ENCODE measurements at regions of chr5 and their contacts with region 1.

Region 1: DNA sequence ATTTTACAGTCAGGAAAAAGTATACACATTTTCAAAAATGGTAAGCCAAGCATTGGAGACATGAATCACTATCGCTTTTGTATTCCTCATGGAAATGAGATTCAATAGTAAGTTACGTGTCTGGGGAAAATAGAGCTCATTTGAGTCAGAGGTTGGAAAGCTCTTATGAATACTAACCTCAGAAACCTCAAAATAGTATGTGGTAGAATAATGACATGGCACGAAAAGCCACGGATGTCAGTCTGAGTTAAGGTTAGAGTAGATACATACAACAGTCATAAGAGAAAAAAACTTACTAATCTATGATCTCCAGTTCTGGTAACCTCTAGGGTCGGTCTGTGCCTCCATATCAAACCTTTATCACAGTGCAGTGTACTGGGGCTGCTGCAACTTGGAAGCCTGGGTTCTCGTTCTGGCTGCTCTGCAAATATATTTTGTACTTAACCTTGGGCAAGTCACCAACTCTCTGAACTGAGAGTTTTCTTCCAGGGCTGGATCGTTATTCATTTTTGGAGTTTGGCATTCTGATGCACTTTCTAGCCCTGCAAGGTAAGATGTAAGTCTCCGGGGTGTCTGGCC is 31.8 kb downstream of the MAP1B start:
- DNase-seq: no peak
- H3K4me3 Mint-ChIP-seq: no peak overlapping the region
- H3K27ac Mint-ChIP-seq: no peak overlapping the region
- H3K4me1 Mint-ChIP-seq: peaks cover 22% of the 10 kb centered on the region
- H3K27me3 Mint-ChIP-seq: peaks cover 75% of the 10 kb centered on the region

Region 2: GRCh38 chr5:71932655-71933338 is 206.2 kb before region 1 on chr5:
- intact Hi-C with region 1: no loop called
- DNase-seq: no peak
- H3K4me3 Mint-ChIP-seq: no peak overlapping the region
- H3K27ac Mint-ChIP-seq: no peak overlapping the region
- H3K4me1 Mint-ChIP-seq: no peaks in the 10 kb centered on the region
- H3K27me3 Mint-ChIP-seq: peaks cover 5% of the 10 kb centered on the region

Region 3: DNA sequence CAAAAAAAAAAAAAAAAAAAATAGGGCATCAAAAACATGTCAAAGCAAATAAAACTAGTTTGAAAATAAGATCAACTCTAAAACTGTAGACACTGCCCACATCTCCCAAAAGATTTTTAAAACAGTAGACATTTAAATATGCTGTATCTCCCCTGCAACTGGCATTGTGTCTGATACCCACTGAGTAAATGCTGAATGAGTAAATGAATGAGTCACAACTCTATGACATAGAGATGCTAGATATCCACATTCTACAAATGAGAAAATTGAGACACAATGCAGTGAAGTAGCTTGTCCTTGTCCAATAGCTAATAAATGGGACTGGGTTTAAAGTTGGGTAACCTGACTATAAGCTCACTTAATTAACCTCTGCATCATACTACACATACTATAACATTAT is 45.8 kb before region 1 on chr5:
- intact Hi-C with region 1: loop called (anchors 2 kb)
- DNase-seq: no peak
- H3K4me3 Mint-ChIP-seq: no peak overlapping the region
- H3K27ac Mint-ChIP-seq: no peak overlapping the region
- H3K4me1 Mint-ChIP-seq: peaks cover 15% of the 10 kb centered on the region
- H3K27me3 Mint-ChIP-seq: peaks cover 17% of the 10 kb centered on the region

Region 4: GRCh38 chr5:72156946-72157624 is 18.1 kb after region 1 on chr5:
- intact Hi-C with region 1: no loop called
- DNase-seq: no peak
- H3K4me3 Mint-ChIP-seq: no peak overlapping the region
- H3K27ac Mint-ChIP-seq: no peak overlapping the region
- H3K4me1 Mint-ChIP-seq: no peaks in the 10 kb centered on the region
- H3K27me3 Mint-ChIP-seq: peaks cover 26% of the 10 kb centered on the region

Region 5: DNA sequence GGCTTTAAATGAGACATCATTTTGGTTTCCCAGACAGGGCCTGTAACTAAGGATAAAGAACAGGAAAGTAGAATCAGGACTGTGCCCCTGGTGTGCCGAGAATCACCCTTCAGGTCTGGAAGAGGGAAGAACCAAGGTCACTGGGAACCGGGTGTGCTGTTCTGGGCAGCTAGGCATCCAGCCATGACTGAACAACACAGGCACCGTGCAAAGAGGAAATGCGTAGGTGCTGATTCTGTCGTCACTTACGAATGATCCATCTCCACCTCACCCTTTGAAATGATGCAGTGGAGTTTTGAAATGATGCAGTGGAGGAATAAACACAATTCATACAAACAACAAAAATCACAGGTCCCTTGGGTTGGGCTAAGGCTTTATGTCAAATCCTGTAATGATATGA is 32.6 kb after region 1 on chr5:
- intact Hi-C with region 1: loop called (anchors 5 kb)
- DNase-seq: no peak
- H3K4me3 Mint-ChIP-seq: no peak overlapping the region
- H3K27ac Mint-ChIP-seq: no peak overlapping the region
- H3K4me1 Mint-ChIP-seq: peaks cover 3% of the 10 kb centered on the region
- H3K27me3 Mint-ChIP-seq: peaks cover 48% of the 10 kb centered on the region

Region 6: GRCh38 chr5:72194846-72195245 is 55.8 kb after region 1 on chr5:
- intact Hi-C with region 1: no loop called
- DNase-seq: peak; percentile 21
- H3K4me3 Mint-ChIP-seq: peak overlapping the region; percentile 11
- H3K27ac Mint-ChIP-seq: no peak overlapping the region
- H3K4me1 Mint-ChIP-seq: peaks cover 9% of the 10 kb centered on the region
- H3K27me3 Mint-ChIP-seq: peaks cover 82% of the 10 kb centered on the region

Region 7: GRCh38 chr5:72234265-72234700 is 95.3 kb after region 1 on chr5:
- intact Hi-C with region 1: loop called (anchors 1 kb)
- DNase-seq: no peak
- H3K4me3 Mint-ChIP-seq: no peak overlapping the region
- H3K27ac Mint-ChIP-seq: no peak overlapping the region
- H3K4me1 Mint-ChIP-seq: peaks cover 42% of the 10 kb centered on the region
- H3K27me3 Mint-ChIP-seq: peaks cover 25% of the 10 kb centered on the region

Region 8: GRCh38 chr5:72252574-72253155 is 113.6 kb after region 1 on chr5:
- intact Hi-C with region 1: no loop called
- DNase-seq: no peak
- H3K4me3 Mint-ChIP-seq: no peak overlapping the region
- H3K27ac Mint-ChIP-seq: no peak overlapping the region
- H3K4me1 Mint-ChIP-seq: peaks cover 5% of the 10 kb centered on the region
- H3K27me3 Mint-ChIP-seq: no peaks in the 10 kb centered on the region

Region 9: GRCh38 chr5:72268753-72269410 is 129.8 kb after region 1 on chr5:
- intact Hi-C with region 1: loop called (anchors 1 kb)
- DNase-seq: peak; percentile 26
- H3K4me3 Mint-ChIP-seq: no peak overlapping the region
- H3K27ac Mint-ChIP-seq: no peak overlapping the region
- H3K4me1 Mint-ChIP-seq: peaks cover 2% of the 10 kb centered on the region
- H3K27me3 Mint-ChIP-seq: no peaks in the 10 kb centered on the region

Region 10: GRCh38 chr5:72347801-72348305 is 208.8 kb after region 1 on chr5:
- intact Hi-C with region 1: loop called (anchors 1 kb)
- DNase-seq: no peak
- H3K4me3 Mint-ChIP-seq: no peak overlapping the region
- H3K27ac Mint-ChIP-seq: peak overlapping the region; percentile 88
- H3K4me1 Mint-ChIP-seq: peaks cover 47% of the 10 kb centered on the region
- H3K27me3 Mint-ChIP-seq: no peaks in the 10 kb centered on the region

Measured in activated T-helper 2 cell treated with anti-CD3 and anti-CD28 coated beads, Interferon-gamma antibody, Interleukin-2, Interleukin-4, amounts not matched to agents 10 μg/mL and 5 μg/mL and 100 μg/mL, durations not matched to agents 14 hours and 24 hours and 36 hours (primary cell).